Prostate gland (tissue), 2 donors: ENCODE measurements at regions of chr2 and their contacts with region 1.

Region 1: GRCh38 chr2:111897924-111898702 is at the start of gene MERTK:
- DNase-seq: peak; percentile 90
- H3K4me3 ChIP-seq: peak within 1 kb of the TSS; percentile 86 to 93
- H3K27ac ChIP-seq: peak within 1 kb of the TSS; percentile 92 to 96
- H3K4me1 ChIP-seq: peaks cover 10% of the 10 kb centered on the region
- H3K27me3 ChIP-seq: no peaks in the 10 kb centered on the region
- CTCF ChIP-seq: peak; percentile 51 to 86 (median 80)
- POLR2A ChIP-seq: peak; percentile 73
- total RNA-seq, gene MERTK: 22.2 to 43.6 TPM

Region 2: DNA sequence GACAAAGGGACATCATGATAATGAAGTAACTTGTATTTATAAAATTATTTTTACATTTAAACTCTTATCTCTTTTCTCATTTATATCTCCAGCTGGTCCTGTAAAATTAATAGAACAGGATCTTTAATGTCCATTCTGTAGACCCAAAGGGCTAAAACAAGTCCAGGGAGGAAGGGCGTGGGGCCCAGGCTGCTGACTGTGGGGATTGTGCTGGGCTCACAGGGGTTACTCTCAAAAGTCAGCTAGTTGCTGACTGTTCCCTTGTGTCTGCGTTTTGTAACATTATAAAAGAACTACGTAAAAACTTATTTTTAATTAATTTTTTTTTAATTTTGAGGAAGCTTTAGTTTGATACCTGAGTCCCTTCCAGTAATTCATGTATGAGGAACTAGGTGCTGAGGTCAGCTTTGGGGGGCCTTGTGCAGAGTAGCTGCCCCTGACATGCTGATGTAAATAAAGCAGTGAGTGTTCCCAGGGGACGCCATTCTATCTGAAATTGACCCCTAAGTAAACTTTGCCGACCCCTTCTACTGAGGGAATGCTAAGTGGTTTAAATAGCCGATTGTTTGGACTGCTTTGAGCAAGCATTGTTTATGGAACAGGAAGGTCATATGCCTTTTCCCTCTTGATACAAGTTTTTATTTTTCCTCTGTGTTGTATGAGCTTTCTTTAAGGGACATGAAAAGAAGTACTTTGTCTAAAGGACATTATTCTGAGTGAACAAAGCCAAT is 56.7 kb after region 1 on chr2:
- intact Hi-C with region 1: loop called (anchors 5 kb)
- DNase-seq: no peak
- H3K4me3 ChIP-seq: no peak overlapping the region
- H3K27ac ChIP-seq: peak overlapping the region; percentile 0 to 17
- H3K4me1 ChIP-seq: no peaks in the 10 kb centered on the region
- H3K27me3 ChIP-seq: no peaks in the 10 kb centered on the region
- CTCF ChIP-seq: no peak
- POLR2A ChIP-seq: no peak

Region 3: DNA sequence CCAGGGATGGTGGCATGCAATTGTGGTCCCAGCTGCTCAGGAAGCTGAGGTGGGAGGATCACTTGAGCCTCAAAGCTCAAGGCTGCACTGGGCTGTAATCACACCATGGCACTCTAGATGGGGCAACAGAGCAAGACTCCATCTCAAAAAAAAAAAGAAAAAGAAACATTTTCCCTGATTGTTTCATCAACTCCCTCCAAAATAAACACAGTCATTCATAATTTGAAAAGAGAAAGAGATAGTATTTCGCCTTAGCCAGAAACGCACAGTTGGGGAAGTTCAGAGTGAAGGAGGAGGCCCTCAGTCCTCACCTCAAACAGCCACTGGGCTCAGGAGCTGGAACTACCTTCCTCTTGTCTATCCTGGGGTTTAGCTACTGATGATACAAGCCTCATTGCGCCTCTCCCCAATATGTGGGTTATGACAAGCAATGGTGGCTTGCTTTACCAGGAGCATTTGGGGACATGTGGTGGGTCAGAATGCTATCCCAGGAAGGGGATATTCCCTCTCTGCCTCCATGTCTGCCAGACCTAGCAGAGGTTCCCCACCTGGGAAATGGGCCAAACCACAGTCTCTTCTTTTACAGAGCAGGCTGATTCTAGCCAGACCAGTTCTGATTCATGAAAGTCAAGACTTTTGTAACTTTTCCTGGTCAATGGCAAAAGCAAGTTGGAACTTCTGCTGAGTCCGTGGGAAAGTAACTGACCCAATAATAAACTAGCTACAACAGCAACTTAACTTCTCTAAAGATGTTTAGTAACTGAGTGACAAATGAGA is 134.8 kb after region 1 on chr2:
- intact Hi-C with region 1: loop called (anchors 5 kb)
- DNase-seq: peak; percentile 75
- H3K4me3 ChIP-seq: no peak overlapping the region
- H3K27ac ChIP-seq: peak overlapping the region; percentile 25 to 38
- H3K4me1 ChIP-seq: peaks cover 5% of the 10 kb centered on the region
- H3K27me3 ChIP-seq: no peaks in the 10 kb centered on the region
- CTCF ChIP-seq: no peak
- POLR2A ChIP-seq: no peak

Region 4: DNA sequence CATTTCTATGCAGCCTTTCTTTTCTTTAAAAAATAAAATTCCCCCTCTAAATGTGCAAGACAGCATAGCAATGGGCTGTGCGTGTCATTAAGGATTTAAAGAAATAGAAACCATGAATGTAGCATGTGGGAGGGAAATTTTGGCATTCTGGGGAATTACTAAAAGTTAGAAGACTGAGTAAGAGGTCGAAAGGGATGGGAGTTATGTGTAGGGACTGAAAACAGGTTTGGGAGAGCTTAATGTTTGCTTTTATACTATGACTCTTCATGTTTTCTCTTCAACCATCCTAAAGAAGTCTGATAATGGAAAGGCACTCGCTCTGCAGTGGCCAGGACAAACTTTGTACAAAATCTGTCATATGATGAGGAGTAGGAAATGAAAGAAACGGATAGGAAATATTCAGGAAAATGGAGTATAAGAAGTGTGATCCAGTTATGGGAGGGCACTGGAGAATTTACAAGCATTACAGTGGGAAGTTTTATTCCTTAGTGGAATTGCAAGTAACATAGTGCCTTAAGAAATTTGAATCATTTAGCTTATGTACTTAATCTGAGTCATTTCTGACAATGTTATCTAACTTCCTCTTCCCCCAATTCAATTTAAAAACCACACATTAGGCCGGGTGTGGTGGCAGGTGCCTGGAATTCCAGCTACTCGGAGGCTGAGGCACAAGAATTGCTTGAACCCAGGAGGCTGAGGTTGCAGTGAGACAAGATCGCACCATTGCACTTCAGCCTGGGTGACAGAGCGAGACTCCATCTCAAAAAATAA is 177.6 kb after region 1 on chr2:
- intact Hi-C with region 1: no loop called
- DNase-seq: no peak
- H3K4me3 ChIP-seq: no peak overlapping the region
- H3K27ac ChIP-seq: no peak overlapping the region
- H3K4me1 ChIP-seq: no peaks in the 10 kb centered on the region
- H3K27me3 ChIP-seq: no peaks in the 10 kb centered on the region
- CTCF ChIP-seq: no peak
- POLR2A ChIP-seq: no peak

Region 5: DNA sequence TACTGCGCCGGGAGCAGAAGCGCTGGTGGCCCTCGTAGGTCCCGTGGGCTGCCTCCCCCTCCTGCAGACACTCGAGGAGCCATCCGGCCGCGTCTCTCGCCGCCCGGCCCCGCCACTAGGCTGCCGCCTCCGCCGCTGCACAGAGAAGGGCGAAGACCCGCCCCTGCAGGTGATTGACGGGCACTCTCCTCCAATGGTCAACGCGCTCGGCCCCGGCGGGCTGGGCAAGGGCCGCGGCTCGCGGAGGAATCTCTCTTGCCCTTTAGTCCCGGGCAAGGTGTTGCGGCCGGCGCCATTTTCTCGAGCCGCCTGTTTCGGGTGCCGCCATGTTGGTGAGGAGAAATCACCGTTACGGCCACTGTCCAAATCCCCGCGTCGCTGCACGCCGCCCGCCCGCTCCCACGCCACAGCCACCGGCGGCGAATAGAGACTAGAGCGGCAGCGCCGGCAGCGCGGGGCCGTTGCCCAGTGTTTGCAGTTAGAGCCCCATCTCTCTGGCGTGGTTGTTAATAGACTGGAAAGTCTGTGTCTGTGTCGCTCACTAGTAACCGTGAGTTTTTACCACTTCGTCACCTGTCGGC is 377.3 kb after region 1 on chr2 and contains the start of gene ZC3H6:
- intact Hi-C with region 1: loop called (anchors 10 kb)
- DNase-seq: peak; percentile 98
- H3K4me3 ChIP-seq: peak within 1 kb of the TSS; percentile 95 to 98
- H3K27ac ChIP-seq: peak within 1 kb of the TSS; percentile 100
- H3K4me1 ChIP-seq: no peaks in the 10 kb centered on the region
- H3K27me3 ChIP-seq: no peaks in the 10 kb centered on the region
- CTCF ChIP-seq: peak; percentile 16 to 70 (median 42)
- POLR2A ChIP-seq: peak; percentile 93
- total RNA-seq, gene ZC3H6: 10.2 to 10.5 TPM